ENCODE measurements at regions of chr11 and their contacts with region 1.

Region 1: DNA sequence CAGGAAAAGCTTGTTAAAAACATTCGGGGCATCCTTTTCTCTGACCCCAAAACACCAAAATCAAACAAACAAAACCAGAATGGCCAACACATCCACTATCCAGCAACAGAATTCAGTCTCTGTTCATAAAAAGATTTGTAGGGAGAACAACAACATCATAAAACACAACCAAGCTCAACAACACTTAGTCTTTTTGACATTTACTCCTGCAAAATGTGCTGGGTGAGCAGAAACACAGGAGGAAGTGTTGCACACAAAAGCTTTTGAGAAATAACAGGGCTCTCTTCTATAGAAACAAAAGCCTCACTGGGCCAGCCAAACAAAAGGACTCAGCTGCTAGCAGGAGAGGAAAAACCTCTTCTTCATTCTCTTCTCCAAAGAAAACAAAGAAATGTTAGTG is 736.0 kb upstream of the CCDC90B start:
- DNase-seq: no peak
- ATAC-seq: no peak
- H3K4me3 ChIP-seq: no peak overlapping the region
- H3K27ac ChIP-seq: no peak overlapping the region
- H3K4me1 ChIP-seq: peaks cover 0 to 4% (median 0%) of the 10 kb centered on the region in 9 donors
- H3K27me3 ChIP-seq: no peaks in the 10 kb centered on the region
- CTCF ChIP-seq: no peak

Region 2: DNA sequence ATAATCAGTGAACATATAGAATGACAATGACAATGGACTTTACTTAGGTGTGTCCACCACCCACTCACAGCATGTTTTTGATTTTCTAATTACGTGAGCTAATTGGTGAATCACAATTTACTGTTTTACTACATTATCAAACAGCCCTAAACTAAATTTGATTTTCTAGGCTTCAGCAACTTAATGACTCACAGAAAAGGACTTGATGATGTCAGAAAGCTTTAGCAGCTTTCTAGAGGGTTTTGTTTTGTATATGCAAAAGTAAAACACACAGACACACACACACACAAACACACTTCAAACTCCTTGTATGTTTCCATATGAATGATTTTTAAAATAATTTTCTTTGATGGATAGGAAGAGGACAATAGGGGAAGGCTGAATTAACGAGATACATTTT is 142.5 kb after region 1 on chr11:
- intact Hi-C with region 1: loop called in 1 of 10 experiments (anchors 5 kb)
- DNase-seq: no peak
- ATAC-seq: no peak
- H3K4me3 ChIP-seq: no peak overlapping the region
- H3K27ac ChIP-seq: no peak overlapping the region
- H3K4me1 ChIP-seq: no peaks in the 10 kb centered on the region
- H3K27me3 ChIP-seq: no peaks in the 10 kb centered on the region
- CTCF ChIP-seq: no peak

Measured in heart right ventricle (tissue), 16 donors.